GM12878 (cell line): ENCODE measurements at regions of chr15 and their contacts with region 1.

Region 1: GRCh38 chr15:63600616-63601025 is 3.4 kb downstream of the FBXL22 start:
- DNase-seq: peak; percentile 77
- ATAC-seq: peak; percentile 80
- H3K4me3 ChIP-seq: peak overlapping the region; percentile 87
- H3K27ac ChIP-seq: peak overlapping the region; percentile 85
- H3K4me1 ChIP-seq: peaks cover 34% of the 10 kb centered on the region
- H3K27me3 ChIP-seq: no peaks in the 10 kb centered on the region
- CTCF ChIP-seq: no peak; a peak in 1 of 6 replicates
- EP300 ChIP-seq: no peak
- POLR2A ChIP-seq: peak; percentile 94
- RAD21 ChIP-seq: no peak

Region 2: DNA sequence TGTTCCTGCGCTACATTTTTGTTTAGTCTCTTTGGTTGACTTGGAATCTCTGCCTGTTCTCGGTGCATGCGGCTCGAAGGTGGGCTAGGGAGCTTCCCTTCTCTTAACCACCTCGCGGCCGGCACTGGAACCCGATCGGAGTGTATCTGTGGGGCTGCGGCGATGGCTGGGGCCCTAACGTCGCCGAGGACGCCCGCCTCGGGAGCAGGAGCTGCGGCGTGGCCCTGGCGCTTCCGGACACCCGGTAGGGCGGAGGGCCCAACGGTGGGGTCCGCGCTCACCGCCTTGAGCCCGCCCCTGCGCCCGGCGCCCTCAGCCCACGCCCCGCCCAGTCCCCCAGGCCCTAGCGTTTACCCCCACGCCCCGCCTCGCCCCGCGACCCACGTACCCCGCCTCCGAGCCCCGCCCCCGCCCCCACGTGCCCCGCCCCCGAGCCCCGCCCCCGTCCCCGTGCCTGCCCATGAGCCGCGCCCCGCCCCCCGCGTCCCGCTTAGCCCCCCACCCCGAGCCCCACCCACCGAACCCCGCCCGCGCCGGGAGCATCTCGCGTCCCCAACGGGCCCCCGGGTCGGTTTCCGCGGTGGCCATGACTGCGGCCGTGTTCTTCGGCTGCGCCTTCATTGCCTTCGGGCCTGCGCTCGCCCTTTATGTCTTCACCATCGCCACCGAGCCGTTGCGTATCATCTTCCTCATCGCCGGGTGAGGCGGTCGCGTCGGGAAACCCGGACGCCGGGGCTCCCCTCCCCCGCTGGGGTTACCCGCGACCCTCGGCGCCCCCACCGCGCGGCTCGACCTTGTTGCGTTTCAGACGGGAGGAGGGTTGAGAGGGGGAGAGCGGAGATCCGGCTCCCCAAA is 323.4 kb before region 1 on chr15 and contains the start of gene APH1B:
- CTCF ChIA-PET with region 1: no interaction called
- POLR2A ChIA-PET with region 1: no interaction called
- RAD21 ChIA-PET with region 1: interaction called, 3 read pairs
- SMC1A ChIA-PET with region 1: no interaction called
- in situ Hi-C with region 1: loop called (anchors 25 kb)
- intact Hi-C with region 1: no loop called
- DNase-seq: no peak
- ATAC-seq: peak; percentile 94
- H3K4me3 ChIP-seq: peak within 1 kb of the TSS; percentile 94
- H3K27ac ChIP-seq: peak within 1 kb of the TSS; percentile 62
- H3K4me1 ChIP-seq: peaks cover 4% of the 10 kb centered on the region; the same call in 1 of the 2 replicates
- H3K27me3 ChIP-seq: no peaks in the 10 kb centered on the region
- CTCF ChIP-seq: no peak
- EP300 ChIP-seq: no peak
- POLR2A ChIP-seq: peak; percentile 89
- RAD21 ChIP-seq: no peak
- polyA plus RNA-seq, gene APH1B: 12.9 to 17.6 TPM

Region 3: GRCh38 chr15:63481105-63481810 is 119.4 kb before region 1 on chr15:
- CTCF ChIA-PET with region 1: interaction called, 272 read pairs
- POLR2A ChIA-PET with region 1: interaction called, 10 read pairs
- RAD21 ChIA-PET with region 1: interaction called, 40 read pairs
- SMC1A ChIA-PET with region 1: interaction called, 57 read pairs
- in situ Hi-C with region 1: no loop called
- intact Hi-C with region 1: no loop called
- DNase-seq: peak; percentile 83
- ATAC-seq: peak; percentile 60
- H3K4me3 ChIP-seq: no peak overlapping the region
- H3K27ac ChIP-seq: peak overlapping the region; percentile 77
- H3K4me1 ChIP-seq: peaks cover 88% of the 10 kb centered on the region
- H3K27me3 ChIP-seq: no peaks in the 10 kb centered on the region
- CTCF ChIP-seq: 0 out of 6 replicates have a peak, but pooled peaks of 1 of the 3 experiments have one; percentile 4
- EP300 ChIP-seq: 0 out of 4 replicates have a peak, but pooled peaks of 1 of the 2 experiments have one; percentile 23
- POLR2A ChIP-seq: no peak
- RAD21 ChIP-seq: no peak

Region 4: DNA sequence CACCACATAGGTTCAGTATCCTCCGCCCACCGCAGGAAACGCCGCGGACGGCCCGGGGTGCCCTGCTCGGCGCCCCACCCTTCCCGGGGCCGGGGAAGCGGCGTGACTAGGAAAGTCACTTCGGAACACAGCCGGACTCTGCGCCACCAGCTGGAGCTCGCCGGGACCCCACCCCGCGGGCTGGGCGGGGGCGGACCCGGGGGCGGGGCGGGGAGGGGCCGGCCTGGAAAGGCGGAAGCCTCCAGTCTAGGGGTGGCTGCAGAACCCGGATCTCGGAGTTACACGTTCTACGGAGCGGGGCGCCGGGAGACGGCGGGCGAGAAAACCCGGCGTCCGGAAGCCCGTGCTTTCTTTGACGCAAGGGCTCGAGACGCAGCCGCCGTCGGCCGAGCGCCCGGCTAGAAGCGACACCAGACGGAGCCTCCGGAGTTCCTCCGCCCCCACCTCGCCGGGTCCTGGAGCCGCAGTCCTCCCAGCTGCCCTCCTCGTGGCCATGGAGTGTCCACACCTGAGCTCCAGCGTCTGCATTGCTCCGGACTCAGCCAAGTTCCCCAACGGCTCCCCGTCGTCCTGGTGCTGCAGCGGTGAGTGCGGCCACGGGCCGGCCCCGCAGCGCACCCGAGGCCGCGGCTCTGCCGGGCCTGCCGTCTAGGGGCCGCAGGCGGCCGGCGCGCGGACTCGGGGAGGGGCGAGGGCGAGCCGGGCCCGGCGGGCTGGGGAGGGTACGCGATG is 96.2 kb before region 1 on chr15 and contains the start of gene USP3:
- CTCF ChIA-PET with region 1: interaction called, 38 read pairs
- POLR2A ChIA-PET with region 1: interaction called, 66 read pairs
- RAD21 ChIA-PET with region 1: interaction called, 113 read pairs
- SMC1A ChIA-PET with region 1: interaction called, 23 read pairs
- in situ Hi-C with region 1: no loop called
- intact Hi-C with region 1: no loop called
- DNase-seq: no peak
- ATAC-seq: peak; percentile 72
- H3K4me3 ChIP-seq: peak within 1 kb of the TSS; percentile 96
- H3K27ac ChIP-seq: peak within 1 kb of the TSS; percentile 100
- H3K4me1 ChIP-seq: peaks cover 30% of the 10 kb centered on the region
- H3K27me3 ChIP-seq: no peaks in the 10 kb centered on the region
- CTCF ChIP-seq: peak in 2 of 3 experiments; percentile 30 to 39; a peak in 4 of 6 replicates
- EP300 ChIP-seq: peak in 1 of 2 experiments; percentile 50; a peak in 3 of 4 replicates
- POLR2A ChIP-seq: peak; percentile 85
- RAD21 ChIP-seq: peak; percentile 30
- polyA plus RNA-seq, gene USP3: 23.8 to 45.7 TPM

Region 5: GRCh38 chr15:63539521-63539920 is 61.1 kb before region 1 on chr15:
- CTCF ChIA-PET with region 1: interaction called, 17 read pairs
- POLR2A ChIA-PET with region 1: interaction called, 5 read pairs
- RAD21 ChIA-PET with region 1: interaction called, 18 read pairs
- SMC1A ChIA-PET with region 1: interaction called, 12 read pairs
- in situ Hi-C with region 1: no loop called
- intact Hi-C with region 1: no loop called
- DNase-seq: no peak
- ATAC-seq: no peak
- H3K4me3 ChIP-seq: no peak overlapping the region
- H3K27ac ChIP-seq: no peak overlapping the region
- H3K4me1 ChIP-seq: peaks cover 35% of the 10 kb centered on the region
- H3K27me3 ChIP-seq: no peaks in the 10 kb centered on the region
- CTCF ChIP-seq: no peak
- EP300 ChIP-seq: no peak
- POLR2A ChIP-seq: no peak
- RAD21 ChIP-seq: no peak

Region 6: GRCh38 chr15:63626955-63627354 is 26.3 kb after region 1 on chr15:
- CTCF ChIA-PET with region 1: interaction called, 4 read pairs
- POLR2A ChIA-PET with region 1: interaction called, 5 read pairs
- RAD21 ChIA-PET with region 1: interaction called, 10 read pairs
- SMC1A ChIA-PET with region 1: interaction called, 10 read pairs
- in situ Hi-C with region 1: no loop called
- intact Hi-C with region 1: no loop called
- DNase-seq: peak; percentile 56
- ATAC-seq: peak; percentile 93
- H3K4me3 ChIP-seq: no peak overlapping the region
- H3K27ac ChIP-seq: peak overlapping the region; percentile 80
- H3K4me1 ChIP-seq: peaks cover 18% of the 10 kb centered on the region
- H3K27me3 ChIP-seq: no peaks in the 10 kb centered on the region
- CTCF ChIP-seq: no peak
- EP300 ChIP-seq: no peak
- POLR2A ChIP-seq: no peak
- RAD21 ChIP-seq: no peak

Region 7: DNA sequence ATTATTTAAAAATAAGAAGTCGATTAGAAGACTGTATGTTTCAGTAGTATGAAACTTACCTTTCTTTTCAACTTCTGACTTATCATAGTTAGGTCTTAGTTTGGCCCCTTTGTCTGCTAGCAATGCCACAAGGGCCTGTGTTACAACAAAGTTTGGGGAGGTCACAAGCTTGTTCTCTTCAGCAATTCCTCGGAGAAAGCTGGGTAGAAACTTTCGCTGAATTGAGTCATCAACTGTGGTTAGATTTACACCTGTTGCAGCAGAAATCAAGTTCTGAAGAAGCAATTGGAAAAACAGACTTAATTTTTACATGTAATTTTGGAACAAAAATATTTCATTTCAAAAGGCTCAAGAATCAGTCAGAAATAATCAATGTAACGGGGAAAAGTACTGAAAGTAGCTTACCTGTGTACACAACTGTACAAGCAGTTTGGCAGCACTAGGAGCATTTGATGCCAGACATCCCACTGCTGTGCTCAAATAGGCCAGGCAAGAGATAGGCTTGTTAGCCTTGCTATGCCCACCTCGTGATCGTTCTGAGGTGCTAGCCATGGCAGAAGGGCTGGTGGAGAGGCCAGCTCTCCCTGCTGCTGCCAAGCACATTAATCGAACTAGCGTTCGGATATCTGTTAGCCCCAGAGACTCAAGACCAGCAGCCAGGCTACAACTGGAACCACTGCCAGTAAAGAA is 55.2 kb after region 1 on chr15:
- CTCF ChIA-PET with region 1: no interaction called
- POLR2A ChIA-PET with region 1: no interaction called
- RAD21 ChIA-PET with region 1: no interaction called
- SMC1A ChIA-PET with region 1: no interaction called
- in situ Hi-C with region 1: no loop called
- intact Hi-C with region 1: no loop called
- DNase-seq: no peak
- ATAC-seq: no peak
- H3K4me3 ChIP-seq: no peak overlapping the region
- H3K27ac ChIP-seq: no peak overlapping the region; the same call in 1 of the 2 replicates
- H3K4me1 ChIP-seq: no peaks in the 10 kb centered on the region
- H3K27me3 ChIP-seq: no peaks in the 10 kb centered on the region
- CTCF ChIP-seq: no peak
- EP300 ChIP-seq: no peak
- POLR2A ChIP-seq: no peak
- RAD21 ChIP-seq: no peak